ENCODE measurements at regions of chr14 and their contacts with region 1.

Region 1: DNA sequence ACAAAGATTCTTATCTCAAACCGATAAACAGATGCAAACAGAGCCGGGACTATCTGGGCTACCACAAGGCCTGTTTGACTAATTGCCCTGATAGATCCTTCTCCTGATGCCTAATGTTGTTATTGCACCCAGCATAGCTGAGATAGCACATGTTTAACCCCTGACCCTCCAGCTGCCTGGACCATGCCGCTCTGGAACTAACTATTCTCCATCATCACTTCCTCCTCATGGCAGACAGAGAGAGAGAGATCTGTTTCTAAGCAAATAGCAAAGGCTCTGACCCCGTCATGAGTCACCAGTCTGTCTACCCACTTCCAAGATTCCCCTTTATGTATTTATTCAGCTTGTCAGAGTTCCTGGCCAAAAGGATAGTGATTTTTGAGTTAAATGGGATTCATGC is 58.2 kb upstream of the FLRT2 start:
- DNase-seq: peak in 5 of 6 donors; percentile 50 to 83 (median 73)
- ATAC-seq: peak; percentile 80 to 91 (median 84)
- H3K4me3 ChIP-seq: no peak overlapping the region
- H3K27ac ChIP-seq: peak overlapping the region in 3 of 4 donors; percentile 2 to 79 (median 66)
- H3K4me1 ChIP-seq: peaks cover 38 to 66% (median 63%) of the 10 kb centered on the region in 3 donors
- H3K27me3 ChIP-seq: no peaks in the 10 kb centered on the region
- CTCF ChIP-seq: no peak

Region 2: DNA sequence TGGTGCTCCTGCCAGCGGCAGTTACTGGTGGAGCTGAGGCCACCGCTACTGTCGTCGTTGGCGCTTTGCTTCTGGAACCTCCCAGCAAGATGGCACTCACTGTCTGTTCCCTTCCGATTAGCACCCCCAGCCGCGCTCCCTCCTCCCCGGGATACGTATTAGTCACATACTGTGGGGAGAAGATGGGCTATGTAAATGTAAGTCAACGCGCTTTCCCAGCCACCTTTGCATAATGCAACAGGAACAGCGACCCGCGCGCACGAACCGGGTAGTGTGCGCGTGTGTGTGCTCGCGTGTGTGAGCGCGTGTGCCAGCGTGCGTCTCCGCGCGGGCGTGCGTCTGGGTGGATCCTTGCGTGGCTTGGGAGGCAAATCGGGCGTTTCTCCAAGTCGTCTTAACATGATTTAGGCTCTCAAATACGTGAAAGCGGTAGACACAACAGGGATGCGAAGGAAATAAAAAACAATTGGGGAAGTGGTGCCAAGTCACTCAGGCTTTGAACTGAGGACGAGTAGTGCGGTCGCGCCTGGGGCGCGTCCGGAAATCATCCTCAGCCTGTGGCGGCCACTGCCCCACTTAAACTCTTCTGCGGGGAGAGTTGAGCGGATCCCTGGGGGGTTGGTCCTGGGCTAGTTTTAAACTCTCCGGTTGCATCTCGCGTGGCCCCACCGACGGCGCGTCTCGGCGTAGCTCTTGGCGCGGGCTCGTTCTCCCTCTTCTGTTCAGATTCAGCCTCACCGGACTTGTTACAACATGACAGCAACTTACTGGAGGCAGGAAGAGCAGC is 60.1 kb after region 1 on chr14:
- intact Hi-C with region 1: loop called in 1 of 3 experiments (anchors 5 kb)
- DNase-seq: peak; percentile 48 to 79 (median 70)
- ATAC-seq: peak; percentile 18 to 43 (median 34)
- H3K4me3 ChIP-seq: peak overlapping the region; percentile 61 to 82 (median 68)
- H3K27ac ChIP-seq: peak overlapping the region; percentile 51 to 96 (median 78)
- H3K4me1 ChIP-seq: peaks cover 0 to 16% (median 0%) of the 10 kb centered on the region in 3 donors
- H3K27me3 ChIP-seq: no peaks in the 10 kb centered on the region
- CTCF ChIP-seq: peak in 1 of 4 donors; percentile 8

Measured in pancreas (tissue), 10 donors.